ENCODE measurements at regions of chr1 and their contacts with region 1.

Region 1: DNA sequence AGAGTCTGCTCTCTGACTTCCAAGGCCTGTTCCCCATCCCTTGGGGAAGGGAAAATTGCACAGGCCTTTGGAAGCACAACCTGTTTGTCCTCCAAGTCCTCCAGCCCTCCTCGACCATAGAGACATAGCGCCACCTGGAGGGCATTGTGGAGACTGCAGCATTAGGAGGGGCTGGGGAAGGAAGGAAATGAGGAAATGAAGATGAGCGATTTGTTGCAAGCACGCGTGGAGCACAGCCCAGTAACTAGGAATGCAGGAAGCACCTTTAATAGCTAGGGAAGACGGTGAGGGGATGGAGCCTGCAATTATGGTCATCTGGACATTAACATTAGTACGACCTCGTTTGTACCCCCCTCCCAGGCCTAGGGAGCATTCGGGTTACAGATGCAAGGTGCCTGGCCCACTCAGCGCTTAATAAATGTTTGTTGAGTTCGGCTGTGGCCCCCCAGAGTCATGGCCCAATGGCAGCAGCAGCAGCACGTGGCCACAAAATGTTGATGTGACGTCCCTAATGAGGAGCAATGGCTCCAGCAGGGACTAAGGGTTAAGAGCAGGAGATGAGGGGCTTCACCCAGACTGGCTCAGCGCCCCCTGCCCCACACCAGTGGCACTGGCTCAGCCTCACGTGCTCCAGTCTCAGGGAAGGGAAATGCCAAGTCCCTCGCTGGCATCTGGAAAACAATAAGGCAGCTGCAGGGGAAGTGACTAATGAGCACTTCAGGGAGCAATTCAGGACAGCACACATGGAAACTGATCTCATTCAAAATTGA is 8.0 kb upstream of the CAMK2N1 start:
- DNase-seq: peak; percentile 71
- H3K4me3 Mint-ChIP-seq: no peak overlapping the region
- H3K27ac Mint-ChIP-seq: no peak overlapping the region
- H3K4me1 Mint-ChIP-seq: peaks cover 7% of the 10 kb centered on the region
- H3K27me3 Mint-ChIP-seq: peaks cover 21% of the 10 kb centered on the region

Region 2: DNA sequence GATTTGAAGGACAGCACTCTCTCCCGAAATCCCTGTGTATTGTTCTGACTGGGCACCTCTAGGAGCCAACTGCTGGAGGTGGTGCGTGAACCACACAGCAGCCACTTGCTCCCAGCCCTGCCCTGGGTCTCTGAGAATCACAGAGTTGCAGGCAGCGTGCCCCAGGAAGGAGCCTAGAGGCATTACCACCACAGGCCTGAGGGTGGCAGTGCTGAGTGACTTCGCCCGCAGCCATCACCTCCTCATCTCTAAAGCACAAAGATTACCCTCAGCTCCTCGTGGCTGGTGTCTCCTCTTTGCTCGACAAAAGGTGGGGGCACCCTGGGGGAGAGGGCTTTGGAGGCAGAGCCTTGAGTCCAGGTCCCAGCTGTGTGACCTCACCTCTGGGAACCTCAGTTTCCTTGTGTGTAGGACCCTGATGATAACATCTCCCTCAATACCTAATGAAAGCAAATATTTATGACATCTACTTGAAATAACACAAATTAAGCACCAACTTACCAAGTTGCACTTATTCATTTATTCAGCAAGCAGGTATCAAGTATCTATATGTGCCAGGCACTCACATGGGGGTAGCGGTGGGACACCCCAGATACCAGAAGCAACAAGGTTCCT is 117.0 kb before region 1 on chr1:
- intact Hi-C with region 1: loop called (anchors 1 kb)
- DNase-seq: peak; percentile 33
- H3K4me3 Mint-ChIP-seq: no peak overlapping the region
- H3K27ac Mint-ChIP-seq: no peak overlapping the region
- H3K4me1 Mint-ChIP-seq: peaks cover 4% of the 10 kb centered on the region
- H3K27me3 Mint-ChIP-seq: peaks cover 27% of the 10 kb centered on the region